Activated T-helper 2 cell treated with anti-CD3 and anti-CD28 coated beads, Interferon-gamma antibody, Interleukin-2, Interleukin-4, amounts not matched to agents 10 μg/mL and 5 μg/mL and 100 μg/mL, durations not matched to agents 14 hours and 24 hours and 36 hours (primary cell): ENCODE measurements at regions of chr14 and their contacts with region 1.

Region 1: GRCh38 chr14:69611201-69612011 is at the start of gene SUSD6:
- DNase-seq: peak; percentile 80
- H3K4me3 Mint-ChIP-seq: peak within 1 kb of the TSS; percentile 94
- H3K27ac Mint-ChIP-seq: peak within 1 kb of the TSS; percentile 97
- H3K4me1 Mint-ChIP-seq: peaks cover 52% of the 10 kb centered on the region
- H3K27me3 Mint-ChIP-seq: no peaks in the 10 kb centered on the region
- total RNA-seq, gene SUSD6: 46.6 and 46.7 TPM in 2 replicates

Region 2: DNA sequence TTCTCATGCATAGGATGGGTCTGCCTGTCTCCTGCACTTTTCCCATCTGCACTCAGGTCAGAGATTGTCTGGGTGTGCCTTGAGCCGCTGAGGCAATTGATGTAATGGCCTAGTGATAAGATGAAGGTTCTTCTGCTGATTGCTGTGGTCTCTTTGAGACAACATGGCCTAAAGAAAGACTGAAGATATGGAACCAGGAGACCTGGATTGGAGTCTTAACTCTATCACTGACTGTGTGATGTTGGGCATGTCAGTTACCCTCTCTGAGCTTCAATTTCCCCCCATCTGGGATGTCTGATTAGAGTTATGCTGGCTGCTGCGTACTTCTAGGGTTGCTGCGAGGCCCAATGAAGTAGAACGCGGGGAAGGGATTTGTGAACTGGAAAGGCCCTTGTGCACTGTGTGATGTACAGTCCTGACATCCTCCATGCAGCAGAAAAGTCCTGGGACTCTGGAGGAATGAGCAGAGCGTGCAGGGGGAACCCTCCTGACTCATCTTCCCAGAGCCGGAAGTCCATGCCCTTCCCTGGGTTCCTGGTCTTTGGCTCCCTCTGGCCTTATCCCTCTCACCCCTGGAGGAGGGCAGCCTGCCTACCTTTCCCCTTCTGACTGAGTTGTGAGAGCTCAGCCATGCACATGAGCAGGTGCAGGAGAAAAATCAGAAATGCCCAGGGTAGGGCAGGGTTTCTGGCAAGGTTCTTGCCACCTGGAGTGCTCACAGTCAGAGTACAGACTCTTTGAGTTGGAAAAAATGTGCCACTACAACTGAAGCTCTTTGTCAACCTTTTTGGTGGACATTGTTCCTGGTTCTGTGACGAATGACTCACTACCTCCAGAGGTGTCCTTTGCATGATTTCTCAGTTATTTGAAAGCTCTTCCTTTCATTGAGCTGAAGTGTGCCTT is 105.8 kb before region 1 on chr14:
- intact Hi-C with region 1: no loop called
- DNase-seq: no peak
- H3K4me3 Mint-ChIP-seq: no peak overlapping the region
- H3K27ac Mint-ChIP-seq: no peak overlapping the region
- H3K4me1 Mint-ChIP-seq: no peaks in the 10 kb centered on the region
- H3K27me3 Mint-ChIP-seq: peaks cover 14% of the 10 kb centered on the region

Region 3: GRCh38 chr14:69535230-69535848 is 76.1 kb before region 1 on chr14:
- intact Hi-C with region 1: no loop called
- DNase-seq: no peak
- H3K4me3 Mint-ChIP-seq: no peak overlapping the region
- H3K27ac Mint-ChIP-seq: no peak overlapping the region
- H3K4me1 Mint-ChIP-seq: no peaks in the 10 kb centered on the region
- H3K27me3 Mint-ChIP-seq: peaks cover 23% of the 10 kb centered on the region

Region 4: DNA sequence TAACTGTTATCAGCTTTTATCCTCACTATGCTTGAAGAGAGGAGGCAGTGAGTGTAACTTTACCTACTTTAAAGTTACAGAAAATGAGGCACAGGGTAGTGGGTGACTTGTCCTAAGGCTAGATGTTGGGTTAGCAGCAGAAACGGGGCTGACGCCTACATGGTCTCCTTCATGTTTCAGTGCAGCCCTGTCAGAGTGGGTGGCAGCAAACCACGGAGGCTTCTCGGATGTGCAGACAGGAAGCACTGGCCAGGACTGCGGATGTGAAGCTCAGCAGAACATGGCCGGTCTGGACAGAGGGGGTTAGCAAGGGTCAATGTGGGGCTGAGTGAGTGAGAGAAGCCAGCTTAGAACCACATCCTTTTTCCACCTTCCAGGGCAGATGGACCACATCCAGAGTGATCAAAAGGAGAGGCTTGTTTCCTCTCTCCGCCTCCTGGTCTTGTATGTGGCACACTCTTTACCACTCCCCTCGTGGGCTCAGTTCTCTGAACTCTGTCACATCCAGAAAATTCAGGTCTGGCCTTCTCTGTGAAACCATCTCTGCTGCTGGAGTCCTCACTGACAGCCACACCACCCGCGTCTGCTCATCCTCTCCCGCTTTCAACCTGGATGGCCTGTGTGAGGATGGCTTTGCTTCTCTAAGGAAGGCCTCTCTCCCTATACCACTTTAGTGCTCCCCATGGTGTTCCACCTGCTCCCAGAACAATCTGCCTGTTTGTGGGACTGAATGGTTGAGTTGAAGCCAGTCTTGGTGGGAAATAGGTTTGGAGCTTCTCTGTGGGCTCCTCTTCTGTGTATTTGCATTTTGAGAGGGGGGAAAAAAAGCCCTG is 14.1 kb after region 1 on chr14:
- intact Hi-C with region 1: loop called (anchors 1 kb)
- DNase-seq: peak; percentile 72
- H3K4me3 Mint-ChIP-seq: peak overlapping the region; percentile 69
- H3K27ac Mint-ChIP-seq: peak overlapping the region; percentile 89
- H3K4me1 Mint-ChIP-seq: peaks cover 76% of the 10 kb centered on the region
- H3K27me3 Mint-ChIP-seq: no peaks in the 10 kb centered on the region